Caco-2 (cell line): ENCODE measurements at regions of chr7 and their contacts with region 1.

Region 1: DNA sequence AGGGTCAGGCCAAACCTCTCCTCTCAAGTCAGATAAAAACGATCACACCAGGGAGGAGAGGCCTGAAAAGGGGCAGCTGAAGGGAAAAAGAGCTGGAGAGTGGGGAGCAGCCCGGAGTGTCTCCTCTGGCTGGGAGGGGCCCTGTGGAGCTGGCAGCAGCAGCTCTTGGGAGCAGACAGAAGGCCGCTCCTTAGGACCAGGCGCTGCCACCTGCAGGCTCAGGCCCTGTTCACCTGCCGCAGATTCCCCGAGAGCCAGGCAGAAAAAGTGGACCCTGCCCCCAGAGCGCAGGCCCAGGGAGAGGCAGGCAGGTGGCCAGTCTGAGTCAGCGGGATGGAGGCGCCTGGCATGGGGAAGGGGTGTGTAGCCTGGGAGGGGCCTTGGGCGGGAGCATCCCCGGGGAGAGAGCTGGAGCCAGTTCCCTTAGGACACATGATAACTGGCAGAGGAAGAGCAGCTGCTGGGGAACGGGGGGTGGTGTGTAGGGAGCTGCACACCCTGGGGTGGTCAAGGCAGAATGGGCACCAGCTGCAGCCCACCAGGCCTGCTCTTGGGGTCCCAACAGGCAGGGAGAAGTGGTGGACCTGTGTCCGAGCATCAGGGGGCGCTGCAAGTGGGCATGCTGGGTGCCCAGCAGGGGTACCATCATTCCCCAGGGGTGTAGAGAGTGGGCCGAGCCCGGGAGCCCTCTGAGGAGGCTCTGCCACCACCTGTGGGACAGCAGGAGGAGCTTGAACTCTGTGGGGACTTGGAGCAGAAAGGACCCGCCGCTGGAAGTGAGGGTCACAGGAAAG is 177.2 kb upstream of the RHEB start:
- DNase-seq: peak; percentile 90 to 92
- H3K4me3 ChIP-seq: no peak overlapping the region
- H3K4me3 Mint-ChIP-seq: no peak overlapping the region
- H3K27ac Mint-ChIP-seq: peak overlapping the region; percentile 53
- H3K4me1 ChIP-seq: peaks cover 38% of the 10 kb centered on the region
- H3K4me1 Mint-ChIP-seq: peaks cover 22% of the 10 kb centered on the region
- H3K27me3 ChIP-seq: no peaks in the 10 kb centered on the region
- H3K27me3 Mint-ChIP-seq: no peaks in the 10 kb centered on the region
- CTCF ChIP-seq: peak; percentile 22 to 66

Region 2: DNA sequence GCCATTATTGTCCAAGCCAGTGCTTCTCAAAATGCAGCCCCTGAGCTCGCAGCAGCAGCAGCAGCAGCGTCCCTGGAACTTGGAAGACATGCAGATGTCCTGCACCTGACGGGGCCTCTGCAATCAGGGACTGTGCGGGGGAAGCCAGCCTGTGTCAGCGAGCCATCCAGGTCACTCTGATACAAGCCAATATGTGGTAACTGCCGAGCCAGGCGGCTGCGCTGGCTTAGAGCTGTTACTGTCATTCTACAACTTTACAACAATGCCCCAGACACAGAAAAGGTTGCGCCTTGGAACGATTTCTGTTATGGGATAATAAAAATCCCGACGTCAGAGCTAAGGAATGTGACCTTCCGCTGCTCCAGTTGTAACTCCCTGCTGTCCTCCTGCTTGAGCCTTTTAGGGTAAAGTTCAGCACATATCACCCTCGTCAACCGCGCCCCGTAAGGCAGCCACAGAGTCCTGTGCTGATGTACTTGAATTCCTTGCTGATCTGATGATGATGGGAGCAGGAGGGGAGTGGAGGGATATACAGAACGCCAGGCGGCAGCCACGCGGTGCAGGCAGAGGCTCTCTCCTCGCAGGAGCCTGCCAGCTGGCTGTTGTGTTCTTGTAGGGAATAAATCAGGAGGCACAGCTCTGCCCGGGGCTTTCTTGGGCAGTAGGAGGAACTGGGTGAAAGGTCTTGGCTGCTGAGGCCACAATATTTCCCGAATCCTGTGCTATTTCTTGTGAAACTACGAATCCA is 237.0 kb before region 1 on chr7:
- CTCF ChIA-PET with region 1: no interaction called
- POLR2A ChIA-PET with region 1: no interaction called
- intact Hi-C with region 1: loop called (anchors 10 kb)
- DNase-seq: peak; percentile 90 to 97
- H3K4me3 ChIP-seq: peak overlapping the region; percentile 25
- H3K4me3 Mint-ChIP-seq: peak overlapping the region; percentile 78
- H3K27ac Mint-ChIP-seq: peak overlapping the region; percentile 96
- H3K4me1 ChIP-seq: peaks cover 24% of the 10 kb centered on the region
- H3K4me1 Mint-ChIP-seq: peaks cover 19% of the 10 kb centered on the region
- H3K27me3 ChIP-seq: no peaks in the 10 kb centered on the region
- H3K27me3 Mint-ChIP-seq: no peaks in the 10 kb centered on the region
- CTCF ChIP-seq: peak in 1 of 2 experiments; percentile 60

Region 3: GRCh38 chr7:151608031-151608551 is 88.8 kb before region 1 on chr7:
- CTCF ChIA-PET with region 1: no interaction called
- POLR2A ChIA-PET with region 1: no interaction called
- intact Hi-C with region 1: loop called (anchors 1 kb)
- DNase-seq: peak; percentile 59 to 71
- H3K4me3 ChIP-seq: no peak overlapping the region
- H3K4me3 Mint-ChIP-seq: no peak overlapping the region
- H3K27ac Mint-ChIP-seq: no peak overlapping the region
- H3K4me1 ChIP-seq: 0 out of 2 replicates have a peak, but pooled peaks cover 5% of the 10 kb centered on the region
- H3K4me1 Mint-ChIP-seq: no peaks in the 10 kb centered on the region
- H3K27me3 ChIP-seq: no peaks in the 10 kb centered on the region
- H3K27me3 Mint-ChIP-seq: no peaks in the 10 kb centered on the region
- CTCF ChIP-seq: peak; percentile 13 to 32

Region 4: GRCh38 chr7:151626422-151627115 is 70.3 kb before region 1 on chr7:
- CTCF ChIA-PET with region 1: interaction called, 21 read pairs
- POLR2A ChIA-PET with region 1: no interaction called
- intact Hi-C with region 1: loop called (anchors 2 kb)
- DNase-seq: peak; percentile 51 to 55
- H3K4me3 ChIP-seq: no peak overlapping the region
- H3K4me3 Mint-ChIP-seq: no peak overlapping the region
- H3K27ac Mint-ChIP-seq: no peak overlapping the region
- H3K4me1 ChIP-seq: peaks cover 11% of the 10 kb centered on the region
- H3K4me1 Mint-ChIP-seq: peaks cover 6% of the 10 kb centered on the region
- H3K27me3 ChIP-seq: no peaks in the 10 kb centered on the region
- H3K27me3 Mint-ChIP-seq: no peaks in the 10 kb centered on the region
- CTCF ChIP-seq: peak; percentile 39 to 63

Region 5: GRCh38 chr7:151631968-151632749 is 64.8 kb before region 1 on chr7:
- CTCF ChIA-PET with region 1: interaction called, 21 read pairs
- POLR2A ChIA-PET with region 1: no interaction called
- intact Hi-C with region 1: loop called (anchors 2 kb)
- DNase-seq: peak; percentile 89 to 94
- H3K4me3 ChIP-seq: peak overlapping the region; percentile 85
- H3K4me3 Mint-ChIP-seq: peak overlapping the region; percentile 88
- H3K27ac Mint-ChIP-seq: peak overlapping the region; percentile 62
- H3K4me1 ChIP-seq: peaks cover 11% of the 10 kb centered on the region
- H3K4me1 Mint-ChIP-seq: peaks cover 6% of the 10 kb centered on the region
- H3K27me3 ChIP-seq: no peaks in the 10 kb centered on the region
- H3K27me3 Mint-ChIP-seq: no peaks in the 10 kb centered on the region
- CTCF ChIP-seq: peak; percentile 42 to 50

Region 6: GRCh38 chr7:151754142-151754590 is 57.2 kb after region 1 on chr7:
- CTCF ChIA-PET with region 1: no interaction called
- POLR2A ChIA-PET with region 1: no interaction called
- intact Hi-C with region 1: loop called (anchors 2 kb)
- DNase-seq: peak; percentile 90 to 91
- H3K4me3 ChIP-seq: no peak overlapping the region
- H3K4me3 Mint-ChIP-seq: no peak overlapping the region
- H3K27ac Mint-ChIP-seq: peak overlapping the region; percentile 77
- H3K4me1 ChIP-seq: peaks cover 17% of the 10 kb centered on the region
- H3K4me1 Mint-ChIP-seq: peaks cover 20% of the 10 kb centered on the region
- H3K27me3 ChIP-seq: no peaks in the 10 kb centered on the region
- H3K27me3 Mint-ChIP-seq: no peaks in the 10 kb centered on the region
- CTCF ChIP-seq: peak; percentile 86 to 95